ENCODE measurements at regions of chr7 and their contacts with region 1.

Region 1: DNA sequence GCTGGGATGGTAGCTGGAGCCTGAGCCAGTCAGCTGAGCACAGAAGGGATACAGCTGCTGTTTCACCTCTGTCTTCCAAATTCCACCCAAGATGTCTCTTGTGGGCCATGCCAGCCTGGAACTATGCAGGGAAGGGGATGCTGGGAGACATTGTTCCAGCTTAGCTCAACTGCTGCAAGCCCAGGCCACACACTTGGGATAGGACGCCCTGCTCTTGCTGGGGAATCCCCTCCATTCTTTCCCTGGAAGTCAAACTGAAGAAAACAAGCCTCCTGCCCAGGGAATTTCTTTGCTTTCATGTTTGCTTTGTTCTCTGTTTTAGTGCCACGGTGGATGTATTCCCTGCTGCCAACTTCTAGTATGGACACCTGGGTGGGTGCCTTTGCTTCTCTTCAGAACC is 55.2 kb upstream of the CDK13 start:
- DNase-seq: no peak
- H3K4me3 ChIP-seq: no peak overlapping the region
- H3K4me3 Mint-ChIP-seq: no peak overlapping the region
- H3K27ac ChIP-seq: no peak overlapping the region
- H3K27ac Mint-ChIP-seq: no peak overlapping the region
- H3K4me1 ChIP-seq: no peaks in the 10 kb centered on the region
- H3K4me1 Mint-ChIP-seq: peaks cover 3% of the 10 kb centered on the region
- H3K27me3 ChIP-seq: no peaks in the 10 kb centered on the region
- H3K27me3 Mint-ChIP-seq: peaks cover 2 to 5% (median 3%) of the 10 kb centered on the region in 3 donors
- CTCF ChIP-seq: no peak

Region 2: DNA sequence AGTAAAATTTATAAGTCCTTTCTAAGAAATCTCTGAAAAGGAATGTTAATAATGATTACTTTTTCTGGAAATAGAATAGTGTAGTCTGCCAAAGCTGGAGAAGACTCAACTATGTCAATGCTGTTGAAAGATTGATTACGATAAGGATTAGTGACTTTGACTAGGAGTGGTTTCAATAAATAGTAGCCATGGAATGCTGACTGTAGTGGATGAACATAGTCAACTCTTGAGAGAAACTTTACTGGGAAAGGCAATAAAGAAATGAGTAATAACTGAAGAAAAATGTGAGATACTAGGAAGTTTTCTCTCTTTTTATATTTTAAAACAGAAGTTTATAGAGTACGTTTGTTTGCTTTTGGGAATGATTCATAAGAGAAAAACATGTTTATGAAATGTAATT is 49.9 kb before region 1 on chr7:
- intact Hi-C with region 1: no loop called
- DNase-seq: no peak
- H3K4me3 ChIP-seq: no peak overlapping the region
- H3K4me3 Mint-ChIP-seq: no peak overlapping the region
- H3K27ac ChIP-seq: no peak overlapping the region
- H3K27ac Mint-ChIP-seq: no peak overlapping the region
- H3K4me1 ChIP-seq: no peaks in the 10 kb centered on the region
- H3K4me1 Mint-ChIP-seq: no peaks in the 10 kb centered on the region
- H3K27me3 ChIP-seq: no peaks in the 10 kb centered on the region
- H3K27me3 Mint-ChIP-seq: no peaks in the 10 kb centered on the region
- CTCF ChIP-seq: no peak

Region 3: GRCh38 chr7:39880556-39880955 is 14.3 kb before region 1 on chr7:
- intact Hi-C with region 1: no loop called
- DNase-seq: no peak
- H3K4me3 ChIP-seq: no peak overlapping the region
- H3K4me3 Mint-ChIP-seq: no peak overlapping the region
- H3K27ac ChIP-seq: no peak overlapping the region
- H3K27ac Mint-ChIP-seq: no peak overlapping the region
- H3K4me1 ChIP-seq: no peaks in the 10 kb centered on the region
- H3K4me1 Mint-ChIP-seq: peaks cover 4% of the 10 kb centered on the region
- H3K27me3 ChIP-seq: no peaks in the 10 kb centered on the region
- H3K27me3 Mint-ChIP-seq: peaks cover 0 to 1% (median 0%) of the 10 kb centered on the region in 3 donors
- CTCF ChIP-seq: no peak

Region 4: GRCh38 chr7:40057292-40057691 is 162.4 kb after region 1 on chr7:
- intact Hi-C with region 1: loop called (anchors 5 kb)
- DNase-seq: no peak
- H3K4me3 ChIP-seq: no peak overlapping the region
- H3K4me3 Mint-ChIP-seq: no peak overlapping the region
- H3K27ac ChIP-seq: peak overlapping the region in 1 of 2 donors; percentile 0
- H3K27ac Mint-ChIP-seq: peak overlapping the region in 2 of 7 donors; percentile 28 to 31
- H3K4me1 ChIP-seq: no peaks in the 10 kb centered on the region
- H3K4me1 Mint-ChIP-seq: peaks cover 2% of the 10 kb centered on the region
- H3K27me3 ChIP-seq: no peaks in the 10 kb centered on the region
- H3K27me3 Mint-ChIP-seq: no peaks in the 10 kb centered on the region
- CTCF ChIP-seq: no peak